HEK293T (cell line): ENCODE measurements at regions of chr1 and their contacts with region 1.

Region 1: GRCh38 chr1:32876341-32877210 is 5.9 kb upstream of the FNDC5 start:
- DNase-seq: peak; percentile 91

Region 2: GRCh38 chr1:32892368-32893197 is 16.0 kb after region 1 on chr1:
- CTCF ChIA-PET with region 1: interaction called, 10 read pairs
- POLR2A ChIA-PET with region 1: interaction called, 3 read pairs
- DNase-seq: peak; percentile 91

Region 3: DNA sequence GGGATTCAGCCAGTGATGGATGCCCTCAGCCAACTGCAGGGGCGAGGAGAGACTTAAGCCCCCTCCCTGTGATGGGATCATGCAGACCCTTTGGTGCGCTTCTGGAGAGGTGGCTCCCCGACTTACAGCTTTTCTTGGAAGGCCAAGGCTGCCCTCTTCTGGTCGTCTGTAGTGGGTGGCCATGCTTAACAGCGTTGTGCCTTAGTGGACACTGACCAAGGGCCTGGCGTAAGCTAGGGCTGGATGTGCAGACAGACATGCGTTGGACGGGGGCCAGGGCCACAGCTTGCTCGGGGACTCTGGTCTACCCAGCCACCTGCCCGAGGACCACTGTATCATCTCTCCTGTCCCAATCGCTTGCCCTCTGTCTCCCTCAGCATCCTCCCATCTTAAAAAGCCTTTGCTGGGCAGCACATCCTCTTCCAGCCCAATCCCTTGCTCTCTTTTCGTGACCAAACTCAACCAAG is 209.8 kb after region 1 on chr1:
- CTCF ChIA-PET with region 1: interaction called, 10 read pairs
- POLR2A ChIA-PET with region 1: no interaction called
- DNase-seq: peak; percentile 74